ENCODE measurements at regions of chr1 and their contacts with region 1.

Region 1: GRCh38 chr1:174999216-174999925 is 376 bp upstream of the CACYBP start:
- DNase-seq: peak; percentile 99
- H3K4me3 ChIP-seq: peak overlapping the region; percentile 70
- H3K27ac ChIP-seq: peak overlapping the region; percentile 99
- H3K27me3 ChIP-seq: no peaks in the 10 kb centered on the region
- CTCF ChIP-seq: no peak

Region 2: GRCh38 chr1:174769961-174770549 is 229.3 kb before region 1 on chr1:
- CTCF ChIA-PET with region 1: interaction called, 17 read pairs
- POLR2A ChIA-PET with region 1: no interaction called
- DNase-seq: peak; percentile 20
- H3K4me3 ChIP-seq: no peak overlapping the region
- H3K27ac ChIP-seq: no peak overlapping the region
- H3K27me3 ChIP-seq: no peaks in the 10 kb centered on the region
- CTCF ChIP-seq: peak; percentile 78

Region 3: DNA sequence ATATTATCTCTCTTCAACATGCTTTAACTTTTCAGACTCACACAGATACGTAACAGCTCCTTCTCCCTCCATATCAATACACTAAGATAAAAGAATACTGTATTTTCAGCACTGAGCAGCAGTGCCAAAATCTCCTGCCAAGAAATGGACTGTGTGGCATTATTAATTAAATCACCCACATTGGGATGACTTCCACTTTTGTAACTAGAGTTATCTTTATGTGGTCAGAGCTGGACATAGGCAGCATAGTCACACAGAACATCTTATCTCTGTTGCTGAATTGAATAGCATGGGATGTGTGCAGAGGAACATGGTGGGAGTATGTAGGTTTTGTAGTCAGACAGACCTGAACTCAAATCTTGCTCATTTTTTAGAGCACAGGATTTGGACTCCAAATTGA is 41.0 kb before region 1 on chr1:
- CTCF ChIA-PET with region 1: no interaction called
- POLR2A ChIA-PET with region 1: no interaction called
- DNase-seq: no peak
- H3K4me3 ChIP-seq: no peak overlapping the region
- H3K27ac ChIP-seq: no peak overlapping the region
- H3K27me3 ChIP-seq: no peaks in the 10 kb centered on the region
- CTCF ChIP-seq: no peak

Region 4: GRCh38 chr1:175015243-175015642 is 15.9 kb after region 1 on chr1:
- CTCF ChIA-PET with region 1: no interaction called
- POLR2A ChIA-PET with region 1: interaction called, 17 read pairs
- DNase-seq: no peak
- H3K4me3 ChIP-seq: no peak overlapping the region; the same call in 1 of the 2 replicates
- H3K27ac ChIP-seq: peak overlapping the region; percentile 74
- H3K27me3 ChIP-seq: no peaks in the 10 kb centered on the region
- CTCF ChIP-seq: no peak

Region 5: GRCh38 chr1:175023043-175023921 is 23.9 kb after region 1 on chr1 and contains the start of gene MRPS14:
- CTCF ChIA-PET with region 1: interaction called, 14 read pairs
- POLR2A ChIA-PET with region 1: interaction called, 35 read pairs
- DNase-seq: peak; percentile 98
- H3K4me3 ChIP-seq: peak within 1 kb of the TSS; percentile 96
- H3K27ac ChIP-seq: peak within 1 kb of the TSS; percentile 80
- H3K27me3 ChIP-seq: no peaks in the 10 kb centered on the region
- CTCF ChIP-seq: no peak
- polyA plus RNA-seq, gene MRPS14: 37.4 and 40.8 TPM in 2 replicates

Region 6: DNA sequence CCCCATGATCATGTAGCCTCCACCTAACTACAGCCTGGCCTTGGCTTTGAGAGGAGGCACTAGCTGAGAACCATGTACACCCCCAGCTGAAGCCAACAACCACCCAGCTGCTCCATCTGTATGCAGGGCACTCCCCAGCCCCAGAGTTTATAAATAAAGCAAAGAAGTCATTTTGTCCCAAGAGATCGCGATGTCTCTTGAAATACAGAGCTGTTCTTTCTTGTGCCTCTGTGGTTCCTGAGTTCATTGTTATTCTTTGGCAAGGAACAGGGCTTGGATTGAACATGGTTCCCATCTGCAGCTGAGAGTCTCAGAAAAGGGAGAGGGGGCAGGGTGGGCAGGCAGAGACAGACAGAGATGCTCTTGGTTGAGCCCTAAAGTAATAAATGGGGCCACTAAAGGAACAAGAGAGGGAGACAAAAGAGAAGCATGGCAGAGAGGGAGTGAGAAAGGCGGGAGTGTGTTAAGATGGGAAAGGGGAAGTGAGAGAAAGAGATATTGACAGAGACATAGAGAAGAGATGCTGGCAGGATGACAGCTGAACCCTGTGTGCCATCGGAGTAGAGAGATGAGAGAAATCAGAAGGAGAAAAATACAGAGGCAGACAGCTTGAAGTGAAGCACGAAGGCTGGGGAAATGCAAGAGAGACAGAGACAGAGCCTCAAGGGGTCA is 680.7 kb after region 1 on chr1:
- CTCF ChIA-PET with region 1: no interaction called
- POLR2A ChIA-PET with region 1: no interaction called
- DNase-seq: no peak
- H3K4me3 ChIP-seq: no peak overlapping the region
- H3K27ac ChIP-seq: no peak overlapping the region
- H3K27me3 ChIP-seq: no peaks in the 10 kb centered on the region
- CTCF ChIP-seq: no peak

Measured in AG04450 (cell line).